Activated T-helper 2 cell treated with anti-CD3 and anti-CD28 coated beads, Interferon-gamma antibody, Interleukin-2, Interleukin-4, amounts not matched to agents 10 μg/mL and 5 μg/mL and 100 μg/mL, durations not matched to agents 14 hours and 24 hours and 36 hours (primary cell): ENCODE measurements at regions of chr9 and their contacts with region 1.

Region 1: DNA sequence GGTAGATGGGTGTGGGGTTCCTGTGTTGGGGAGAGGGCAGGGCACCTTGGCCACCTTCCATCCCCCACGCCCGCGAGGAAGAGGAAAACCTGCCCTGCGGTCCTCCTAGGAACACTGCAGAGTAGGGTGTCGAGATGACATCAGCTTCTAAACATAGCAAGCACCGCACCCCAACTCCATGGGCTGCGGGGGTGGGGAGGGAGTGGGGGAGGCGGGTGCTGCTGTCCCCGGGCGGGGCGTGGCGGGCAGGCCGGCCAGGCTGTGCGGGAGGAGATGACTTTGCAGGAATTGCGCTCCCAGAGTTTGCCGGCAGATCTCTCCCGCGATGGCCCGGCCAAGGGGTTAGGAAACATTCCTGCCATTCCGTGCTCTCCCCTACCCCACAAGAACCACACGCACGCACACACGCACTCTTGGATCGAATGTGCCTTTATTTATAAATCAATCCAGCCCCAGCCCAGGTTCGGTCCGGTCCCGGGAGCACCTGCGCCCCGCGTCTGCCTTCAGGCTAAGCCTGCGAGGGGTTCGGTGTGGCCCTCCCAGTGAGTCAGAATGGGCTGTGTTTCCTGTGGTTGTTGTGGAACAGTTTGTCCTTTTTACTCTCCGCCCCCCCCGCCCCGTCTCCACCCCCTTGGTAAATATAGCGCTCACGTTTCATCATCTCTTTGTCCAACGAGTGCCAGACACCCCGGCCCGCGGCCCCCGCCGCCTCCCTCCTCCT is 5.2 kb upstream of the KLF9 start:
- DNase-seq: peak; percentile 74
- H3K4me3 Mint-ChIP-seq: peak overlapping the region; percentile 90
- H3K27ac Mint-ChIP-seq: peak overlapping the region; percentile 99
- H3K4me1 Mint-ChIP-seq: peaks cover 44% of the 10 kb centered on the region
- H3K27me3 Mint-ChIP-seq: peaks cover under 1% of the 10 kb centered on the region

Region 2: DNA sequence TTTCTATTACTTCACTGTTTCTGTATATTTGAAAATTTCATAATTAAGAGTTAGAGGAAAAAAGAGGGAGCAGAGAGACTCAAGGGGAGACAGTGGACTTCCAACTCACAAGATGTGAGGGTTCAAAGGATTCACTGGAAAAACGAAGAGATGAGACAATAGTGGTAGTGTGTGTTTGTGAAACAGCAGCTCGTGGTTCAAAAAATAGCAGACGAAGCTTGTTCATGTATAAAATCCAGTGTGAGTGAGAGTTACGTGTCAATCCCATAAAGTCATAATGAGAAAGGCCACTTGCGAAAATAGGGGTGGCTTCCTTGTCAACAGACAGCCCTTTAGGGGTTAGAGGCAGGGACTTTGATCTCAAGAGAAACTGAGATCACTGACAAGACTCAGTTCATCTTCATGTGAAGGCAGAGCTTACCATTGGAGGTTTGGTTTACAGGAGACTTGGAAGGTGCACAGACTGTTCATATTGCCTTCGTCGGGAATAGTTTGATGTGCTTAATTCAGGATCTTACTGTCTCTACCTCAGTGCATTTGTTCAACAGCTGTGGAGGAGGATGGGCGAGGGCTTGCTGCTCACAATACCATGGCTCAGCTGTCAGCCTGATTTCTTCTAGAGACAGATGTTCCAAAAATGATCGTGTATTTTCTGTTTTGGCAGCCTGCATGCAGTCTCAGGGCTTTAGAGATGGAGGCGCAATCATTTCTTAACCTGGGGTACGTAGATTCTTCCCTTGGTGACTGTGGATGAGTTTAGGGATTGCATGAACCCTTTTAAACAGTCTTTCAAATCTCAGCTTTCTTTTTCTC is 100.4 kb after region 1 on chr9:
- intact Hi-C with region 1: loop called (anchors 1 kb)
- DNase-seq: peak; percentile 12
- H3K4me3 Mint-ChIP-seq: peak overlapping the region; percentile 40
- H3K27ac Mint-ChIP-seq: peak overlapping the region; percentile 76
- H3K4me1 Mint-ChIP-seq: peaks cover 28% of the 10 kb centered on the region
- H3K27me3 Mint-ChIP-seq: no peaks in the 10 kb centered on the region

Region 3: DNA sequence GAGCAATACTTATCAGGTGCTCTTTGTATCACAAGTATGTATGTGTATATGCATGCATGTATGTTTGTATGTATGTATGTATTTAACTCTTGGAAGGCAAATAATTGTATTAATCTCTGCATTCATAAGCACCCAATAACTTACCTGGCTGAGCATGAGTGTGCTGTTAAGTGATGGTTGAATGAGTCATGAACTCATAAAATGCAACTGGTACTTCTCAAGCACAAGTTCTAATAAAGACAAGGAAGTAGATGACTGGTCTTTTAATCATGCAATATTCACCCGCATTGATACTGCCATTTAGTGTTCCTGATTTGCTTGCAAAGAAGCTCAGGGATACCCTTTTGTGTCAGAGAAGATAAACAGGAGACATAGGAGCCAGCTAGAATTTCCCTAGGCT is 906.7 kb after region 1 on chr9:
- intact Hi-C with region 1: no loop called
- DNase-seq: no peak
- H3K4me3 Mint-ChIP-seq: no peak overlapping the region
- H3K27ac Mint-ChIP-seq: no peak overlapping the region
- H3K4me1 Mint-ChIP-seq: no peaks in the 10 kb centered on the region
- H3K27me3 Mint-ChIP-seq: no peaks in the 10 kb centered on the region